Ovary (tissue), 10 donors: ENCODE measurements at regions of chr22 and their contacts with region 1.

Region 1: DNA sequence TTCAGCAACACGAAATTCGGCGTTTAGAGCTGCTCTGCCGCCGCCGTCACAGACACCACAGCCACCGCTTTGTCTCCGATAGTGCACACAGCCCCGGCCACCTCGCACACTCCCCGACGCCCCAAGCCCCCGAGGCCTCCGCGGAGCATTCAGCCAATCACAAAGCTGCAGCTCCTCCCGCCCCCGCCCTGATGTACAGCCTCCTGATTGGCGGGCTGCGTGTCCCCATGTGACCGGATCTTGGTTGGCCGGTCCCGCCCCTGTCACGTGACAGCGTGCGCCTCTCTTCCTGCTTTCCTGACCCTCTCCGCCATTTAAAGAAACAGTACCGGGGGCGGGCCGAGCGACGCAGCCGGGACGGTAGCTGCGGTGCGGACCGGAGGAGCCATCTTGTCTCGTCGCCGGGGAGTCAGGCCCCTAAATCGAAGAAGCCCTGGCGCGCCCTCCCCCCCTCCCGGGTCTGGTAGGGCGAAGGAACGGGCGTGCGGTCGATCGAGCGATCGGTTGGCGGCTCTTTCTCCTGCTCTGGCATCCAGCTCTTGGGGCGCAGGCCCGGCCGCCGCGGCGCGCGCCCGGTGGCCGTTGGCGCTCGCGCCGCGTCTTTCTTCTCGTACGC is at the start of gene TUG1:
- DNase-seq: peak; percentile 98 to 99 (median 98)
- H3K4me3 ChIP-seq: peak within 1 kb of the TSS; percentile 89
- H3K27ac ChIP-seq: peak within 1 kb of the TSS; percentile 85 to 88
- H3K4me1 ChIP-seq: peaks cover 3% of the 10 kb centered on the region
- H3K27me3 ChIP-seq: no peaks in the 10 kb centered on the region
- CTCF ChIP-seq: peak in 1 of 3 donors; percentile 8
- EP300 ChIP-seq: no peak
- POLR2A ChIP-seq: peak; percentile 76
- total RNA-seq, gene TUG1: 71.8 to 101 (median 78.7) TPM

Region 2: DNA sequence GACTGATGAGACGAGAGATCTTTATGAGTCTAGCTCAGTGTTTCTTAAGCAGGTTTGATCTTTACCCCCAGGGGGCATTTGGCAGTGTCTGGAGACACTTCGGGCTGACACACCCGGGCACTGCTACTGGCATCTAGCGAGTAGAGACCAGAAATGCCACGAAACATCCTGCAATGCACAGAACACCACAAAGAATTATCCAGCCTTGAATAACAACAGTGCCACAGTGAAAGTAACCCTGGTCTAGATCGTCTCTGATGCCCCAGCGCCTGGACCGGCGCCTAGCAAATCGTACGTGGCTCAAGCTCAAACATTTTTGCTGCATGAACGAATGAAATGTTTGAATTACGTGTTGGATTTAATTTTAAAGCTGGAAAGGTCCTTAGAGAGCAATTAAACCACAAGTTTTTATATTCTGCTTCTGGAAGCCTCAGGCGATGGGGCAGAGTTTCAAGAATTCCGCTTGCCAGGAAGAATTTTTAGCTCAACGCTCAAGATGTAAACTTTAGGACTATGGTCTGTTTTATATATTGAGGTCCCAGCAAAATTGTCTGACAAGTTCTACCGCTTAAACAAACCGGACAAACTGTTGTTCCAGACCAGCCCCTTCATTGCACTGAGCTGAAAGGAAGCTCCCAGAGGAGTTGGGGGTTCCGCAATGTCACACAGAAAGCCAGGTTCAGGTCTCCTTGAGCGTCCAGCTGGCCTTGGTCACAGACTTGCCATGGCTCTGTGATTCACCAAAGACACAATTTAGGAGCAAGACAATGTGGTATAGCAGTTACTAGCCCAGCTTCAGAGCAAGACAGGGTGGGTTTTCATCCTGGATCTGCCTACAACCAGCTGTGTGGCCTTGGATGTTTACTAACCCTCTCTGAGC is 67.9 kb after region 1 on chr22:
- intact Hi-C with region 1: loop called in 2 of 4 experiments (anchors 10 kb)
- DNase-seq: peak in 2 of 5 donors; percentile 31 to 46
- H3K4me3 ChIP-seq: no peak overlapping the region
- H3K27ac ChIP-seq: peak overlapping the region in 1 of 2 donors; percentile 6
- H3K4me1 ChIP-seq: peaks cover 12% of the 10 kb centered on the region
- H3K27me3 ChIP-seq: no peaks in the 10 kb centered on the region
- CTCF ChIP-seq: no peak
- EP300 ChIP-seq: no peak
- POLR2A ChIP-seq: no peak

Region 3: GRCh38 chr22:31046539-31047226 is 77.7 kb after region 1 on chr22:
- intact Hi-C with region 1: loop called in 1 of 4 experiments (anchors 10 kb)
- DNase-seq: peak; percentile 62 to 76 (median 69)
- H3K4me3 ChIP-seq: no peak overlapping the region
- H3K27ac ChIP-seq: peak overlapping the region; percentile 12 to 25
- H3K4me1 ChIP-seq: peaks cover 21% of the 10 kb centered on the region
- H3K27me3 ChIP-seq: no peaks in the 10 kb centered on the region
- CTCF ChIP-seq: no peak
- EP300 ChIP-seq: no peak
- POLR2A ChIP-seq: no peak

Region 4: GRCh38 chr22:31206906-31207678 is 238.1 kb after region 1 on chr22:
- intact Hi-C with region 1: no loop called
- DNase-seq: no peak
- H3K4me3 ChIP-seq: no peak overlapping the region
- H3K27ac ChIP-seq: no peak overlapping the region
- H3K4me1 ChIP-seq: no peaks in the 10 kb centered on the region
- H3K27me3 ChIP-seq: no peaks in the 10 kb centered on the region
- CTCF ChIP-seq: no peak
- EP300 ChIP-seq: no peak
- POLR2A ChIP-seq: no peak